ENCODE measurements at regions of chr16 and their contacts with region 1.

Region 1: DNA sequence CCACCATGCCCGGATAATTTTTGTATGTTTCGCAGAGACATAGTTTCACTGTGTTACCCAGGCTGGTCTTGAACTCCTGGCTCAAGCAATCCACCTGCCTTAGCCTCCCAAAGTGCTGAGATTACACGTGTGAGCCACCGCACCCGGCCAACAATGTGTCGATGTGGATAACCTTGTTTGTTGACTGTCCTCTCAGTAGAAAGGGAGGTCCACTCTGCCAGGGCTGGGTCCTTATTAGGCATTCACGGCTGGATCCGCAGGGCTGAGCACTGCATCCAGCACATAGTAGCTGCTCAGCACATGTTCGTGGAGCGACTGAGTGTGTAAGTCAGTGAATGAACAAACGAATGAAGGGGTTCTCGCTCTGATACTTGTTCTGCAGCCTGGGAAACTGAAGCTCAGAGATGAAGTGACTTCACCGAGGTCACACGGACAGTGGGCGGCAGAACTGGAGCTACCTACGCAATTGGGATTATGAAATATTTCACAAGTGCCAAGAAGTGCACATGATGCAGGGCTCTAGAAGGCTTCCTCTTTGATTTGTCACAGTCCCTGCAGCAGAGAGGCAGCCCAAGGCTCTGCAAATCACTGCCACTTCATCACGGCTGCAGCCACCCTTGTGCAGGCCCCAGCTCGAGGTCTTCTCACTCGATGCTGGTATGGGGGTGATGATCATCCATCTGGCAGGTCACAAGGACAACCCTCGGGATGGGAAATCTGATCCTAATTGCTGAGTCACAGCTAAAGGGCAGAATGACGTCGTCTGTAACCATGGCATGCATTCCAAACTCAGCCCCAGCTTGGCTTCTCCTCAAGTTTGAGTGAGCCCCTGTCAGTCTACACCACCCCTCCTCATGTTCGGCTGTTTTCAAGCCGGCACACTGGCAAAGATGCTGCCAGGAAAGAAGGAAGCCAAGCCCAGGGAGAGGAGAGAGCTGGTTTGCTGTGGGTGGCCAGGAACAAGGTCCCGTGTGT is 28.0 kb upstream of the SNN start:
- DNase-seq: no peak
- H3K4me3 ChIP-seq: no peak overlapping the region
- H3K4me3 Mint-ChIP-seq: no peak overlapping the region
- H3K27ac ChIP-seq: no peak overlapping the region
- H3K27ac Mint-ChIP-seq: peak overlapping the region in 1 of 7 donors; percentile 47
- H3K4me1 ChIP-seq: peaks cover 14% of the 10 kb centered on the region
- H3K4me1 Mint-ChIP-seq: peaks cover 5 to 15% (median 12%) of the 10 kb centered on the region in 4 donors
- H3K27me3 ChIP-seq: no peaks in the 10 kb centered on the region
- H3K27me3 Mint-ChIP-seq: no peaks in the 10 kb centered on the region

Region 2: DNA sequence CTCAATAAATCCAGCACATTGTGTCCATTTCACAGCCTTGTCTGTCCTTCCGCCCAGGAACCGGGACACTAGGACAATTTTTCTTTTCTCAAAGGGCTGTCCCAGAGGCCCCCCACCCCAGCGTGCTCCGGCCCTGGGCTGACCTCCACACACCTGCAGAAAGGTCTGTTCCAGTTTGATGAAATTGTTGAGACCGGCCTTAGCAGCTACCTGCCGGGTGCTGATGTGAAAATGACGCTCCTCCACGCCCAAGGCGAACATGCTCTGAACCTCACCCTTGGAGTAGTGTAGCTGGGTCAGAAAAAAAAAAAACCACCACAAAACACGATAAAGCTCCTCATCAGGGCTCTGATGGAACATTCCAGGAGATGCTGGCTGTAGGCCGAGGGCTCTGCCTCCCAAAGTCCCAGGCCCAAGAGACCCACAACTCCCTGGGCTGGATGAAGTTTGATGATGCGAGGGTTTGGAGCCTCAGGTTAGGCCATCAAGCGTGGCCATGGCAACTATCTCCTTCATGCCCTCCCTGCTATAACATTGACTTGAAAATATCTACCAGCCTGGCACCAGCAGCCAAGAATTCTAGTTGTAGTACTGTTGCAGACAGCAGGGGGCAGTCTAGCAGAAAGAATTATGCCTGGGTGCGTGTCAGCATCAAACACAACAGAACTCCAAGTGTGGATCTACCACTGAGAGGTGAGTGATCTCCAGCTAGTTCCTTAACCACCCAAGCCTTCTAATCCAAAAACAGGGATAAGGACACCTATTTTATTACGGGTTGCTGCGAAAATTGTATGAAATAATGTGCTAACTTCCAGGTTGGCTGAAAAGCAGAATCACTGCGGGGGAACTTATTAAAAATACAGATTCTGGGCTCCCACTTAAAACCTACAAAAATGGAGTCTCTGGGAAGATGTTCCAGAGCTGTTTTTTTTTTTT is 232.9 kb before region 1 on chr16:
- CTCF ChIA-PET with region 1: interaction called, 11 read pairs
- POLR2A ChIA-PET with region 1: no interaction called
- intact Hi-C with region 1: no loop called
- DNase-seq: peak; percentile 61 to 75 (median 67)
- H3K4me3 ChIP-seq: no peak overlapping the region
- H3K4me3 Mint-ChIP-seq: peak overlapping the region in 1 of 8 donors; percentile 48
- H3K27ac ChIP-seq: no peak overlapping the region
- H3K27ac Mint-ChIP-seq: peak overlapping the region in 2 of 7 donors; percentile 80 to 84
- H3K4me1 ChIP-seq: no peaks in the 10 kb centered on the region
- H3K4me1 Mint-ChIP-seq: peaks cover 0 to 6% (median 4%) of the 10 kb centered on the region in 4 donors
- H3K27me3 ChIP-seq: no peaks in the 10 kb centered on the region
- H3K27me3 Mint-ChIP-seq: no peaks in the 10 kb centered on the region

Region 3: DNA sequence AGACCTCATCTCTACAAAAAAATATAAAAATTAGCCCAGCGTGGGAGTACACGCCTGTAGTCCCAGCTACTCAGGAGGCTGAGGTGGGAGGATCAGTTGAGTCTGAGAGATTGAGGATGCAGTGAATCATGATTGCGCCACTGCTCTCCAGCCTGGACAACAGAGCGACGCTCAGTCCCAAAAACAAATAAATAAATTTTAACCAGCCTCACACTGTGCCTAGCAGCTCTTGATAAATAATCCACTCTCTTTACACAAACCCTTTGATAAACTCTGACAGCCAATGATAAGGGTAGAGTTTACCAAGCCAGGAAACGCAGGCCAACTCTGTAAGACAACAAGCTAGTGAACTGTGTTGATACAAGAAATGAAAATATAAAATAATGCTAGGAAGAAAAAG is 86.2 kb before region 1 on chr16:
- CTCF ChIA-PET with region 1: interaction called, 23 read pairs
- POLR2A ChIA-PET with region 1: no interaction called
- intact Hi-C with region 1: no loop called
- DNase-seq: no peak
- H3K4me3 ChIP-seq: no peak overlapping the region
- H3K4me3 Mint-ChIP-seq: no peak overlapping the region
- H3K27ac ChIP-seq: no peak overlapping the region
- H3K27ac Mint-ChIP-seq: peak overlapping the region in 5 of 7 donors; percentile 8 to 76 (median 38)
- H3K4me1 ChIP-seq: peaks cover 34% of the 10 kb centered on the region
- H3K4me1 Mint-ChIP-seq: peaks cover 31 to 50% (median 34%) of the 10 kb centered on the region in 4 donors
- H3K27me3 ChIP-seq: no peaks in the 10 kb centered on the region
- H3K27me3 Mint-ChIP-seq: no peaks in the 10 kb centered on the region

Region 4: GRCh38 chr16:11586856-11587642 is 53.2 kb before region 1 on chr16 and contains the start of gene LITAF:
- CTCF ChIA-PET with region 1: interaction called, 30 read pairs
- POLR2A ChIA-PET with region 1: interaction called, 16 read pairs
- intact Hi-C with region 1: loop called (anchors 2 kb)
- DNase-seq: peak; percentile 50 to 65 (median 57)
- H3K4me3 ChIP-seq: peak within 1 kb of the TSS; percentile 78 to 82
- H3K4me3 Mint-ChIP-seq: peak within 1 kb of the TSS; percentile 90 to 97 (median 96)
- H3K27ac ChIP-seq: peak within 1 kb of the TSS; percentile 73
- H3K27ac Mint-ChIP-seq: peak within 1 kb of the TSS; percentile 89 to 98 (median 95)
- H3K4me1 ChIP-seq: peaks cover 47% of the 10 kb centered on the region
- H3K4me1 Mint-ChIP-seq: peaks cover 27 to 52% (median 41%) of the 10 kb centered on the region in 4 donors
- H3K27me3 ChIP-seq: no peaks in the 10 kb centered on the region
- H3K27me3 Mint-ChIP-seq: no peaks in the 10 kb centered on the region
- total RNA-seq, gene LITAF: 155 to 157 TPM

Region 5: DNA sequence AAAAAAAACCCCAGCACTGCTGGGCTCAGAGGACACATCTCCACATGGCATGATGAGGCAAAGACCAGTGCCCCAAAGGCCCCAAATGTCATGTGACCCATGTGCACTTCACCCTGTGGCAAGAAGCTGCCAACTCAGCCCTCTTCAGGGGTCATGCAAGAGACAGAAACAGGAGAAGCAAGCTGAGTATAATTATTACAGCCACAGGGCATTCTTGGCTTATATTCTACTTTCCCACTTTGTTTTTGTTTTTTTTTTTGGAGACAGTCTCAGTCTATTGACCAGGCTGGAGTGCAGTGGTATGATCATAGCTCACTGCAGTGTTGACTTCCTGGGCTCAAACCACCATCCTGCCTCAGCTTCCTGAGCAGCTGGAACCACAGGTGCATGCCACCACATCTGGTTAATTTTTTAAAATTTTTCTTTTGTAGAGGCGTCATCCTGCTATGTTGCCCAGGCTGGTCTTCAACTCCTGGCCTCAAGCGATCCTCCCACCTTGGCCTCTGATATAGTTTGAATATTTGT is 20.8 kb before region 1 on chr16:
- CTCF ChIA-PET with region 1: interaction called, 22 read pairs
- POLR2A ChIA-PET with region 1: interaction called, 26 read pairs
- intact Hi-C with region 1: loop called (anchors 2 kb)
- DNase-seq: peak; percentile 42 to 60 (median 57)
- H3K4me3 ChIP-seq: peak overlapping the region in 1 of 2 donors; percentile 25
- H3K4me3 Mint-ChIP-seq: peak overlapping the region; percentile 20 to 83 (median 72)
- H3K27ac ChIP-seq: peak overlapping the region; percentile 29
- H3K27ac Mint-ChIP-seq: peak overlapping the region; percentile 75 to 97 (median 93)
- H3K4me1 ChIP-seq: peaks cover 73% of the 10 kb centered on the region
- H3K4me1 Mint-ChIP-seq: peaks cover 32 to 66% (median 51%) of the 10 kb centered on the region in 4 donors
- H3K27me3 ChIP-seq: no peaks in the 10 kb centered on the region
- H3K27me3 Mint-ChIP-seq: no peaks in the 10 kb centered on the region

Region 6: GRCh38 chr16:11816103-11816502 is 175.9 kb after region 1 on chr16:
- CTCF ChIA-PET with region 1: no interaction called
- POLR2A ChIA-PET with region 1: no interaction called
- intact Hi-C with region 1: loop called (anchors 2 kb)
- DNase-seq: no peak
- H3K4me3 ChIP-seq: no peak overlapping the region
- H3K4me3 Mint-ChIP-seq: no peak overlapping the region
- H3K27ac ChIP-seq: no peak overlapping the region
- H3K27ac Mint-ChIP-seq: no peak overlapping the region
- H3K4me1 ChIP-seq: no peaks in the 10 kb centered on the region
- H3K4me1 Mint-ChIP-seq: peaks cover 2 to 5% (median 4%) of the 10 kb centered on the region in 4 donors
- H3K27me3 ChIP-seq: no peaks in the 10 kb centered on the region
- H3K27me3 Mint-ChIP-seq: peaks cover 0 to 2% of the 10 kb centered on the region in 2 donors

Measured in CD4-positive, alpha-beta memory T cell (primary cell).